ENCODE measurements at regions of chr4 and their contacts with region 1.

Region 1: DNA sequence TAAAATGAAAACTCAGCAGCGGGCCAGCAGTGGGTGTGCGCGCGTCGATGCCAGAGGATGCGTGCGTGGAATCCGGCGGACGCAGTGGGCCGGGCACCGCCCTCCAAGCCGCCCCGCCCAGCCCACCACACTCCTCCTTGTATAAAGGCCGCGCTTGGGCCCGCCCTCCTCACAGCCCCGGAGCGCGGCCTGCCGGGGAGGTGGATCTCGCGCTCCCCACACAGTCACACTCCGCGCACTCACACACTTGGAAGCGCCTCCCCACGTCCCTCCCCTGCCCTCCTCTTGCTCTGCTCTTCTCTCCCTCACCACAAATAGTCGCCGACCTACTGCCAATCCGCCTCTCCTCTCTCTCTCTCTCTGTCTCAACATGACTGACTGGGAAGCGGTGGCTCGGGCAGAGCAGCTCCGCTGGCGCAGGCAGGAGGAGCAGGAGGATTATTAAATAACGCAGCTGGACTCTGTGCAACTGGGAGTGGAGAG is at the start of gene CCSER1:
- DNase-seq: peak; percentile 94
- ATAC-seq: peak; percentile 86
- H3K4me3 ChIP-seq: peak within 1 kb of the TSS; percentile 27 to 98 (median 79)
- H3K4me3 Mint-ChIP-seq: peak within 1 kb of the TSS; percentile 96
- H3K27ac ChIP-seq: peak within 1 kb of the TSS; percentile 89 to 90
- H3K27ac Mint-ChIP-seq: peak within 1 kb of the TSS; percentile 95
- H3K4me1 ChIP-seq: peaks cover 6 to 7% of the 10 kb centered on the region in 2 donors
- H3K4me1 Mint-ChIP-seq: peaks cover 21% of the 10 kb centered on the region
- H3K27me3 ChIP-seq: no peaks in the 10 kb centered on the region
- H3K27me3 Mint-ChIP-seq: no peaks in the 10 kb centered on the region
- CTCF ChIP-seq: no peak
- total RNA-seq, gene CCSER1: 39.5 and 42.9 TPM in 2 replicates

Region 2: DNA sequence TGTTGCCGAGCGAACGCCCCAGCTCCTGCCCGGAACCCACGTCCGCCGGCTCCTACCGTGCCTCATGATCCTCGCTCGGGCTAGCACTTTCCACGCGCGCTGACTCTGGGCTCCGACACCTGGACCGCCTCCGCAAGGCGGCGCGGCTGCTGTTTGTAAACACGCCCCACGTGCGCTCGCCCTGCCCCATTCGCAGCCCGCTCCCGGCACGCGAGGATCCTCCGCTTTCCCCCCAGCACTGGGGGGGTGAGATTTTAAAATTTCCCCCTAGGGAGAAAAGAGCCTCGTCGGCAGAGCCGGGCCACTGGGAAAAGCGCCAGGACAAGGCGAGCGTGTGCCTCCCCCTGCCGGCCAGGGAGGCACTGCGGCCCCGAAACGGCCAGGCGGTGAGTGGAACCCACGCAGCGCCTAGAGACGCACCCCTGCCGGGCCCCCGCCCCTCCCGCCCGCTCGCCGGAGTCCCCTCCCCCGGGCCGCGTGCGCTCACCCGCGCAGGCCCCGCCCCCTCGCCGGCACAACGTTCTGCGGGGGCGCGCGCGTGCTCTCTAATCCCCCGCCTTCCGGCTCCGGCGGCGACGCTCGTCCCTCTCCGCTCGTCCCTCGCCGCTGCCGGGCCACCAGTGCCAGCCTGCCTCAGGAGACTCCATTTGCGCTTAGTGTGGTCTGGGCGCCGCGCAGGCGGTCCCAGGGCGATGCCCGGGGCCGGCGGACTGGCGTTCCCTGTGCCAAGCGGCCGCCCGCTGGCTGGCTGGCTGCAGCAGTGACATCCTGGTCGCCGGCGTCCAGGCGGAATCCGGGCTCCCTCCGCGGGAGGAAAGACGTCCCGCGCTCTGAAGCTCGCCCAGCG is 1016.1 kb before region 1 on chr4 and contains the start of gene TIGD2:
- CTCF ChIA-PET with region 1: no interaction called
- POLR2A ChIA-PET with region 1: no interaction called
- intact Hi-C with region 1: loop called (anchors 2 kb)
- DNase-seq: peak; percentile 94
- ATAC-seq: peak; percentile 92
- H3K4me3 ChIP-seq: peak within 1 kb of the TSS; percentile 70 to 88 (median 82)
- H3K4me3 Mint-ChIP-seq: peak within 1 kb of the TSS; percentile 88
- H3K27ac ChIP-seq: peak within 1 kb of the TSS; percentile 30 to 85
- H3K27ac Mint-ChIP-seq: peak within 1 kb of the TSS; percentile 85
- H3K4me1 ChIP-seq: peaks cover 14 to 18% of the 10 kb centered on the region in 2 donors
- H3K4me1 Mint-ChIP-seq: peaks cover 27% of the 10 kb centered on the region
- H3K27me3 ChIP-seq: peaks cover 0 to 4% (median 1%) of the 10 kb centered on the region in 4 experiments
- H3K27me3 Mint-ChIP-seq: peaks cover 2% of the 10 kb centered on the region
- CTCF ChIP-seq: peak; percentile 94
- total RNA-seq, gene TIGD2: 8.6 and 9.5 TPM in 2 replicates

Region 3: GRCh38 chr4:90025248-90025647 is 102.0 kb before region 1 on chr4:
- CTCF ChIA-PET with region 1: no interaction called
- POLR2A ChIA-PET with region 1: no interaction called
- intact Hi-C with region 1: loop called (anchors 1 kb)
- DNase-seq: peak; percentile 28
- ATAC-seq: no peak
- H3K4me3 ChIP-seq: no peak overlapping the region
- H3K4me3 Mint-ChIP-seq: no peak overlapping the region
- H3K27ac ChIP-seq: no peak overlapping the region
- H3K27ac Mint-ChIP-seq: no peak overlapping the region
- H3K4me1 ChIP-seq: peaks cover 19 to 33% of the 10 kb centered on the region in 2 donors
- H3K4me1 Mint-ChIP-seq: peaks cover 30% of the 10 kb centered on the region
- H3K27me3 ChIP-seq: no peaks in the 10 kb centered on the region
- H3K27me3 Mint-ChIP-seq: no peaks in the 10 kb centered on the region
- CTCF ChIP-seq: peak; percentile 52

Region 4: GRCh38 chr4:90099812-90100211 is 27.5 kb before region 1 on chr4:
- CTCF ChIA-PET with region 1: interaction called, 3 read pairs
- POLR2A ChIA-PET with region 1: interaction called, 8 read pairs
- intact Hi-C with region 1: loop called (anchors 2 kb)
- DNase-seq: peak; percentile 68
- ATAC-seq: peak; percentile 97
- H3K4me3 ChIP-seq: no peak overlapping the region
- H3K4me3 Mint-ChIP-seq: peak overlapping the region; percentile 8
- H3K27ac ChIP-seq: peak overlapping the region in 1 of 2 donors; percentile 63
- H3K27ac Mint-ChIP-seq: peak overlapping the region; percentile 85
- H3K4me1 ChIP-seq: peaks cover 0 to 3% of the 10 kb centered on the region in 2 donors
- H3K4me1 Mint-ChIP-seq: peaks cover 13% of the 10 kb centered on the region
- H3K27me3 ChIP-seq: no peaks in the 10 kb centered on the region
- H3K27me3 Mint-ChIP-seq: peaks cover 5% of the 10 kb centered on the region
- CTCF ChIP-seq: no peak